ENCODE measurements at regions of chr5 and their contacts with region 1.

Region 1: GRCh38 chr5:139392678-139393496 is 2.0 kb downstream of the PROB1 start:
- DNase-seq: peak in 1 of 2 experiments; percentile 94
- H3K4me3 ChIP-seq: peak overlapping the region; percentile 42 to 68 (median 54)
- H3K27ac ChIP-seq: no peak overlapping the region
- H3K4me1 ChIP-seq: peaks cover 3 to 39% (median 21%) of the 10 kb centered on the region in 4 experiments
- H3K27me3 ChIP-seq: peaks cover 14 to 34% (median 28%) of the 10 kb centered on the region in 4 experiments; a peak in 6 of 7 replicates
- CTCF ChIP-seq: peak in 2 of 3 experiments; percentile 74 to 92; a peak in 3 of 4 replicates
- EP300 ChIP-seq: peak in 1 of 2 experiments; percentile 3; a peak in 1 of 3 replicates
- POLR2A ChIP-seq: peak in 1 of 2 experiments; percentile 52; a peak in 2 of 3 replicates
- RAD21 ChIP-seq: peak; percentile 65 to 87

Region 2: DNA sequence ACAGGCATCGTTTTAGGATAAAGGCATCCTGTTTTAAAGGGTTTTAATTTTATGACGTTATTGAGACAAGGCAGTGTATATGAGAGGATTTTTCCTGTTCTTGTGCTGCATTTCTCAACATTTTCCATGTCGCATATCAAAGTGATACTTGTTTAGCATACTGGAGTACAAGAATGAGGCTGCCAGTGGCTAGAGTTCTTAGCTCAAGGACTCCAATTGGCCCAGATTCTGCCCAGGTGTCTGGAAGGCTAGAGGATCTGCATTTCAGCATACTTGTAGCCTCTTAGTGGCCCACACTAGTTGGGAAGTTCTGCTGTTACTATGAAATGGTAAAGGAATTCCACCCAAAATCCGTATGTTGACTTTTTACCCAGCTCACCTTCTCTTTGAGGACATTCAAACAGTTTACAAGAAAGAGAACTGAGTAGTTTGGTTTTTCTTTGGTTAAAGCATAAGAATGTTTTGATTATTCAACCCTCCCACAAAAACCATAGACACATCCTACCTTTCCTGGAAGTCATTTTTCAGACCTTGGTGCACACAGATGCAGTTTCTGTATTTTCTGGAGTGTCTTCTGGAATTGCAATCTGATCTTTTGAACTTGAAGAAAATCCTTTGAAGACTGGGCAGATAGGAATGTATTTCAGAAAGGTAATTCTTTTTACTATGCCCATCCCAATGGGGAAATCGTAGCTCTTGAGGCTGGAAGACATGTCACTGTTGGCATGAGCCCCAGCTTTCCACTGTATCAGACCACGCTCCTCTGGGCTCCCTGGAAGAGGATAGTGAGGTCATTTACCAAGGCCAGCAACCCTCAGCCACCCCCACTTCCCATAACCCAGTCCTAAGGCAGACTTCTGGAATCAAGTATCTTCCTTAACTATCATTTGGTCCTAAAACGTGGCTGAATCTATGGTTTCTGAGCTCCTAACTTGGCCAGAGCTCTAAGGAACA is 21.1 kb before region 1 on chr5:
- CTCF ChIA-PET with region 1: interaction called, 7 read pairs
- POLR2A ChIA-PET with region 1: interaction called, 16 read pairs
- DNase-seq: no peak
- H3K4me3 ChIP-seq: no peak overlapping the region
- H3K27ac ChIP-seq: no peak overlapping the region
- H3K4me1 ChIP-seq: no peaks in the 10 kb centered on the region
- H3K27me3 ChIP-seq: no peaks in the 10 kb centered on the region
- CTCF ChIP-seq: no peak
- EP300 ChIP-seq: no peak
- POLR2A ChIP-seq: no peak
- RAD21 ChIP-seq: no peak

Measured in H1 (cell line).